ENCODE measurements at regions of chr20 and their contacts with region 1.

Region 1: GRCh38 chr20:3820048-3820900 is at the start of gene AP5S1:
- DNase-seq: peak; percentile 88 to 99
- ATAC-seq: peak; percentile 77 to 82
- H3K4me3 ChIP-seq: peak within 1 kb of the TSS; percentile 63
- H3K27ac ChIP-seq: peak within 1 kb of the TSS; percentile 91 to 92
- H3K4me1 ChIP-seq: peaks cover 28% of the 10 kb centered on the region
- CTCF ChIP-seq: peak; percentile 100
- EP300 ChIP-seq: no peak
- POLR2A ChIP-seq: peak; percentile 88
- RAD21 ChIP-seq: peak; percentile 75 to 98
- polyA plus RNA-seq, gene AP5S1: 10.2 and 11.8 TPM in 2 replicates

Region 2: DNA sequence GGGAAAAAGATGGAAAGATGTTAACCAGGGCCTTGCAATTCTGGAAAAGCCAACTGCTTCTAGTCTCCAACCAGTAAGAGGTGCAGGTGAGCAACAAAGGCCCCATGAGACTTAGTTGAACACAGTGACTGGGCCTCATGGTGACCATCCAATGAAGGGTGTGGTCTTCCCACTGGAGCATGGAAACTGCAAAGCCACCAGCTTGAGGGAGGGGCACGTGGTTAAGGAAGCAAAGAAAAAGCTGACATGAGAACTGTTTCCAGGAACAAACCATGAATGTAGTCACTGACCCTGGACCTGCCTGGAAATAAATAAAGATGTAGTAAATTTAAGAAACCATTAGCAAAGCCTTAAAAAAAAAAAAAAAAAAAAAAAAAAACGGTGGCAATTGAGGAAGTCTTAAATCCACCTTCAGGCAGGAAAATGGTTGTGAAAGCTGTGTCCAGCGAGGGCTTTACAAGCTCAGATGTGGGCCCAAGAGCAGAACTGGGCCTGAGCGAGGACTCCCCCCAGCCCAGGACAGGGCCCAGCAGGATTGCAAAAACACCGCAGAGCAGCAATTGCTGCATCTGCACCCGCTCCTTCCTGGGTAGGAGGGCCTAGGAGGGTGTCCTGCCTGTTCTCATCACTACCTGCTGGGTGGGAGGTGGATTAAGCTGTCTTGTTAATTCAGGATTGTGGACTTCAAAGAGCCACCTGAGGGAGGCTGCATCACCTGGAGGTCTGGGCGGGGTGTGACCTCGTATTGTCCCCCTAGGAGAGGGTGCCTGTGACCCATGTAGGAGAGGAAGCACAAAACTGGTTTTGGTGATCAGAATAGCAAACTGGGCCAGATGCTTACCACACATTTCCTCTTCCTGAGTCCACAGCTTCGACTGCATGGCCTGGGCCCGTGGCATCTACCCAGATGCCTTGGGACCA is 167.3 kb before region 1 on chr20:
- CTCF ChIA-PET with region 1: no interaction called
- POLR2A ChIA-PET with region 1: no interaction called
- DNase-seq: no peak
- ATAC-seq: no peak
- H3K4me3 ChIP-seq: no peak overlapping the region
- H3K27ac ChIP-seq: no peak overlapping the region
- H3K4me1 ChIP-seq: no peaks in the 10 kb centered on the region
- CTCF ChIP-seq: no peak
- EP300 ChIP-seq: no peak
- POLR2A ChIP-seq: no peak
- RAD21 ChIP-seq: no peak

Region 3: GRCh38 chr20:3753098-3753980 is 66.9 kb before region 1 on chr20:
- CTCF ChIA-PET with region 1: interaction called, 21 read pairs
- POLR2A ChIA-PET with region 1: interaction called, 5 read pairs
- DNase-seq: peak; percentile 85 to 89
- ATAC-seq: peak; percentile 28 to 62; a peak in 3 of 6 replicates
- H3K4me3 ChIP-seq: no peak overlapping the region
- H3K27ac ChIP-seq: no peak overlapping the region
- H3K4me1 ChIP-seq: peaks cover 7% of the 10 kb centered on the region; the same call in 2 of the 3 replicates
- CTCF ChIP-seq: peak; percentile 81
- EP300 ChIP-seq: no peak
- POLR2A ChIP-seq: no peak
- RAD21 ChIP-seq: peak; percentile 57 to 71

Region 4: DNA sequence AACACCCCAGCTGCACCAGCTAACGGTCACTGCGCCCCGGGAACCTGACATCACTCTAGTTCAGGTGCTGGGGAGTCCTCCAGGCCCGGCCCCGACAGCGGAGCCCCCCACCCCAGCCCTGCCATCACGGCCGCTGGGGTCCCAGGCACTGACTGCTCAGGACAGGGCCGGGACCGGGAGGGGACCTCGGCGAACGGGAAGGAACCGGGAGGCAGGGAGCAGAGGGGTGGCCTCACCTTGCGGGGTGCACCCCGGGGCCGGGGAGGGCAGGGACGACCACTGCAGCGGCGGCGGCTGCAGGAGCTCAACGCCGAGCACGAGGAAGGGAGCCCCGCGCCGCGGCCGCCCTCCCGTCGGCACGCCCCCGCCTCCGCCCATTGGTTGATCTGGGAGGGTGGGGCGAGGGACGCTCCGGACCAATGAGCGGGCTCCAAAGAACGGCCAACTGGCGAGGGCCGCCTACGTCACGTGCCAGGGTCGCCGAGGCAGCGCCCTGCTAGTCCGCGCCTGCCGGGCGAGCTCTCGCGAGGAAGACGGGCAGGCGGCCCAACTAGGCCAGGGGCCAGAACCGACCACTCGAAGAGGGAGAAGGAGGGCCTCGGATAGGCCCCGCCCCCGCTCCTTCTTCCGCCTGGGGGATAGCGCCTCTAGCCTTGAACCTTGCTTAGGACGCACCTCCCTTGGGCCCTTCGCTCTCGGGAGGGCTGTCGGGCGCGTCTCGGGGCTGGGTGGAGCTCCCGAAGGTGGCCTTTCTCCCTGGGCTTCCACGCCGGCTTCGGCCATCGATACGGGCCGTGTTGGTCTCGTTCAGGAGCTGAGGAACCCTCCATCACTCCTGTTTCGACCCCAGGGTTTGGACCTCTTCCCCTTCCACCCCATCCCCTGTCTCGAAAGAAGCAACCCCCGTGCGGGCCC is 52.6 kb before region 1 on chr20 and contains the start of gene ADISSP:
- CTCF ChIA-PET with region 1: interaction called, 52 read pairs
- POLR2A ChIA-PET with region 1: interaction called, 10 read pairs
- DNase-seq: peak; percentile 99
- ATAC-seq: peak; percentile 85 to 93
- H3K4me3 ChIP-seq: peak within 1 kb of the TSS; percentile 87
- H3K27ac ChIP-seq: peak within 1 kb of the TSS; percentile 86 to 92
- H3K4me1 ChIP-seq: peaks cover 20% of the 10 kb centered on the region
- CTCF ChIP-seq: no peak; the same call in 2 of the 3 replicates
- EP300 ChIP-seq: no peak
- POLR2A ChIP-seq: peak; percentile 94
- RAD21 ChIP-seq: no peak
- polyA plus RNA-seq, gene ADISSP: 43.9 and 44.0 TPM in 2 replicates

Region 5: GRCh38 chr20:3786665-3787323 is 33.5 kb before region 1 on chr20 and contains the start of gene CENPB:
- CTCF ChIA-PET with region 1: no interaction called
- POLR2A ChIA-PET with region 1: interaction called, 40 read pairs
- DNase-seq: peak; percentile 84 to 91
- ATAC-seq: peak; percentile 86 to 87
- H3K4me3 ChIP-seq: peak within 1 kb of the TSS; percentile 86
- H3K27ac ChIP-seq: peak within 1 kb of the TSS; percentile 88 to 96
- H3K4me1 ChIP-seq: peaks cover 43% of the 10 kb centered on the region
- CTCF ChIP-seq: peak; percentile 99
- EP300 ChIP-seq: no peak
- POLR2A ChIP-seq: peak; percentile 47
- RAD21 ChIP-seq: peak; percentile 81 to 99
- polyA plus RNA-seq, gene CENPB: 35.9 and 42.6 TPM in 2 replicates

Region 6: DNA sequence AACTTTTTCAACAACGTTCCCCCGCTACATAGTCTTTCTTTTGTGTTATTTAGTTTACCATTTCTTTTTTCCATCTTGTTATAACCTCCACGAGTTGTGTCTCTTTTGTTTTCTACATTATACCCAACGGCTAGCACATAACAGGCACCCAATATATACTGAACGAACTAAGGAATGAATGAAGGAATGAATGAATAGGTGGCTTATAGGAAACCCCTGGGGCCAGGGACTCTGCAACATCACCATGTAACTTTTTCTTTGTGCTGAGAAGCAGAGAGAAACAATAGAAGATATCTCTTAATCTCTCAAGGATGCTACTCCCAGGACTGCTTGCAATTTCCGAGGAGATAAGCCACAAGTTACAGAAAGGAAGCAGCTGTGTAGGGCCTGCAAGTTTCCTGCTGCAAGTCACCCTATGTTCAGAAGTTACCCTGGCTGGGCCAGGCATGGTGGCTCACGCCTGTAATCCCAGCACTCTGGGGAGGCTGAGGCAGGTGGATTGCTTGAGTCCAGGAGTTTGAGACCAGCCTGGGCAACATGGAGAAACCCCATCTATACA is 19.0 kb after region 1 on chr20:
- CTCF ChIA-PET with region 1: interaction called, 128 read pairs
- POLR2A ChIA-PET with region 1: interaction called, 5 read pairs
- DNase-seq: no peak
- ATAC-seq: no peak
- H3K4me3 ChIP-seq: no peak overlapping the region
- H3K27ac ChIP-seq: no peak overlapping the region
- H3K4me1 ChIP-seq: peaks cover 16% of the 10 kb centered on the region
- CTCF ChIP-seq: no peak
- EP300 ChIP-seq: no peak
- POLR2A ChIP-seq: no peak
- RAD21 ChIP-seq: no peak

Region 7: DNA sequence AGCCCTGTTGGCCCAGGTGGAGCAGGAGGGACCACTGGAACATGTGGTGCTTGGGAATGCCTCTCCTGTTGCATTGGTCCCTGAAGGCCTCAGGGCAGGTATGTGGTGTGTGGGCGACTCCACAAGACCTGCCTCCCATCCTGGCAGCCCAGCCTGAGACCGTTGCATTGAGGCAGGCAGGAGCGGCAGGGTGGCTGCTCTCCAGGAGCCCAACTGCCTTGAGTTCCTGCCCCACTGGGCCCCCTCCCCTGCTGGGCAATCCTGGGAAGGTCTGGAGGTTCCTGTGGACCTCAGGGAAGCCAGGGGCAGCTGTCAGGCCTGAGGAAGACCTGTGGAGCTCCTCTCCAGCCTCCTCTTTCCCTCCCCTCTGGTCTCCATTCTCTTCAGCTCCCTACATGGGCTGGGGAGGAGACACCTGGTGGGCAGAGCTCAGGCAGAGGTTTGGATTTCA is 46.2 kb after region 1 on chr20:
- CTCF ChIA-PET with region 1: interaction called, 26 read pairs
- POLR2A ChIA-PET with region 1: no interaction called
- DNase-seq: no peak
- ATAC-seq: peak in 1 of 2 experiments; percentile 14; a peak in 3 of 6 replicates
- H3K4me3 ChIP-seq: no peak overlapping the region
- H3K27ac ChIP-seq: no peak overlapping the region
- H3K4me1 ChIP-seq: 0 out of 3 replicates have a peak, but pooled peaks cover 3% of the 10 kb centered on the region
- CTCF ChIP-seq: no peak
- EP300 ChIP-seq: no peak
- POLR2A ChIP-seq: no peak
- RAD21 ChIP-seq: no peak